ENCODE measurements at regions of chr3 and their contacts with region 1.

Region 1: GRCh38 chr3:53938645-53939044 is 47.0 kb upstream of the SELENOK start:
- DNase-seq: peak; percentile 56
- H3K4me3 ChIP-seq: no peak overlapping the region
- H3K27ac ChIP-seq: no peak overlapping the region
- H3K4me1 ChIP-seq: peaks cover 6% of the 10 kb centered on the region
- H3K27me3 ChIP-seq: no peaks in the 10 kb centered on the region
- CTCF ChIP-seq: peak; percentile 64

Region 2: GRCh38 chr3:53534676-53535400 is 403.8 kb before region 1 on chr3:
- CTCF ChIA-PET with region 1: no interaction called
- POLR2A ChIA-PET with region 1: no interaction called
- intact Hi-C with region 1: no loop called
- DNase-seq: peak; percentile 1
- H3K4me3 ChIP-seq: no peak overlapping the region
- H3K27ac ChIP-seq: no peak overlapping the region
- H3K4me1 ChIP-seq: no peaks in the 10 kb centered on the region
- H3K27me3 ChIP-seq: no peaks in the 10 kb centered on the region
- CTCF ChIP-seq: no peak

Region 3: GRCh38 chr3:54427941-54428871 is 489.6 kb after region 1 on chr3:
- CTCF ChIA-PET with region 1: no interaction called
- POLR2A ChIA-PET with region 1: no interaction called
- intact Hi-C with region 1: loop called (anchors 10 kb)
- DNase-seq: peak; percentile 45
- H3K4me3 ChIP-seq: no peak overlapping the region
- H3K27ac ChIP-seq: no peak overlapping the region
- H3K4me1 ChIP-seq: no peaks in the 10 kb centered on the region
- H3K27me3 ChIP-seq: no peaks in the 10 kb centered on the region
- CTCF ChIP-seq: peak; percentile 73

Region 4: GRCh38 chr3:54476864-54477263 is 538.2 kb after region 1 on chr3:
- CTCF ChIA-PET with region 1: no interaction called
- POLR2A ChIA-PET with region 1: interaction called, 11 read pairs
- intact Hi-C with region 1: no loop called
- DNase-seq: no peak
- H3K4me3 ChIP-seq: no peak overlapping the region
- H3K27ac ChIP-seq: no peak overlapping the region
- H3K4me1 ChIP-seq: no peaks in the 10 kb centered on the region
- H3K27me3 ChIP-seq: no peaks in the 10 kb centered on the region
- CTCF ChIP-seq: no peak